ENCODE measurements at regions of chr2 and their contacts with region 1.

Region 1: GRCh38 chr2:44955593-44956392 is 14.3 kb downstream of the SIX3 start:
- DNase-seq: peak; percentile 61 to 79
- ATAC-seq: peak; percentile 72 to 91 (median 84)
- H3K4me3 ChIP-seq: peak overlapping the region in 9 of 10 donors; percentile 13 to 49 (median 38)
- H3K27ac ChIP-seq: no peak overlapping the region
- H3K4me1 ChIP-seq: peaks cover 15 to 37% (median 29%) of the 10 kb centered on the region in 9 donors
- H3K27me3 ChIP-seq: peaks cover 14 to 98% (median 80%) of the 10 kb centered on the region in 7 donors
- CTCF ChIP-seq: peak; percentile 62 to 95 (median 91)

Region 2: DNA sequence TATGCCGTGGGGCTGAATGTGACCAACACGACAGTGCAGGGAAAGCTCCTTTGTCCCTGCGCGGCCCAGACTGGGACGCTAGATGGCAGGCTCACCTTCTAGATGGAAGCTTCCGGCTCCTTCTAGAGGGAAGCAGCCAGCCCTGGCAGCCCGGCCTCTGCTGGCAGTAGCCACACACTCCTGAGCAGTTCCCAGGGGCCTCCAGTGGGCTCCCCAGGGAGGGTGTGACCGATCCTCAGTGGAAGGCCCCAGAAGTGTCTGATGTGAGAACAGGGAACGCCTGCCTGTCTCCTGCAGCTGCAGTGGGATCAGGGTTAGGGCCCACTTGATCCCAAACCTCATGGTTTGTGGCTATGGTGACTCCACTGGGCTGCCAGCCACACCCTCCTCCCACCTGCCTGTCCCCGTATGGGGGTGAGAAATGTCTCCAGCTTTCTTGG is 911.5 kb before region 1 on chr2:
- intact Hi-C with region 1: loop called in 9 of 10 experiments (anchors 2 to 10 kb)
- DNase-seq: peak; percentile 78 to 81
- ATAC-seq: peak; percentile 79 to 98 (median 96)
- H3K4me3 ChIP-seq: no peak overlapping the region
- H3K27ac ChIP-seq: no peak overlapping the region
- H3K4me1 ChIP-seq: peaks cover 0 to 7% (median 3%) of the 10 kb centered on the region in 9 donors
- H3K27me3 ChIP-seq: peaks cover 0 to 4% (median 0%) of the 10 kb centered on the region in 7 donors
- CTCF ChIP-seq: peak; percentile 46 to 94 (median 88)

Region 3: DNA sequence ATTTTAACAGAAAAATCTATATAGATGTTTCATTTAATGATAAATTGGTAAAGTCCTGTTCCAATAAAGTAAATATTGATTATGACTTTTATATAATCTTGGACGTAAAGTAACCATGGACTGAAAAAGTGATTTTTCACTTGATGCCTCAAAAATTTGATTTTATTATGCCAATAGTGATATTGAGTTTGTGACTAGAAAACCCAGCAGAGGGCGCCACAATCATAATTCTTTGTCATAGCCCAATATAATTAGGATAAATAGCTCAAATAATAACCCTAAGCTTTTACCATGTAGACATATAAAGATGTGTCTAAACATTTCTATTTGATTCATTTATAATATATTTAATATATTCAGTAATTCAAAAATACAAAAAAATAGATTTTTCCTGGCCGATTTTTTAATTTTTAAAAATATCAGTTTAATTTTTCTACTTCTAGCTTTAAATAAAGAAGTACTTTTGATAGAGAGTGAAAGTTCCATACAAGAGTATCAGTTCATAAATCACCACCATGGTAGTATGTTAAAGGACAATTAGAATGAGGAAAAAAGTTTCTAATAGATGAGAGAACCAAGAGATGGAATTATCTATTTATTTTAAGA is 563.4 kb before region 1 on chr2:
- intact Hi-C with region 1: loop called (anchors 2 to 10 kb)
- DNase-seq: peak in 1 of 2 donors; percentile 29
- ATAC-seq: no peak
- H3K4me3 ChIP-seq: no peak overlapping the region
- H3K27ac ChIP-seq: no peak overlapping the region
- H3K4me1 ChIP-seq: no peaks in the 10 kb centered on the region
- H3K27me3 ChIP-seq: no peaks in the 10 kb centered on the region
- CTCF ChIP-seq: peak in 8 of 9 donors; percentile 25 to 75 (median 65)

Region 4: GRCh38 chr2:44397447-44398175 is 558.2 kb before region 1 on chr2:
- intact Hi-C with region 1: loop called in 9 of 10 experiments (anchors 2 to 5 kb)
- DNase-seq: no peak
- ATAC-seq: no peak
- H3K4me3 ChIP-seq: no peak overlapping the region
- H3K27ac ChIP-seq: no peak overlapping the region
- H3K4me1 ChIP-seq: no peaks in the 10 kb centered on the region
- H3K27me3 ChIP-seq: no peaks in the 10 kb centered on the region
- CTCF ChIP-seq: no peak

Region 5: GRCh38 chr2:44560352-44560751 is 395.4 kb before region 1 on chr2:
- intact Hi-C with region 1: loop called in 1 of 10 experiments (anchors 10 kb)
- DNase-seq: peak in 1 of 2 donors; percentile 6
- ATAC-seq: no peak
- H3K4me3 ChIP-seq: no peak overlapping the region
- H3K27ac ChIP-seq: no peak overlapping the region
- H3K4me1 ChIP-seq: no peaks in the 10 kb centered on the region
- H3K27me3 ChIP-seq: no peaks in the 10 kb centered on the region
- CTCF ChIP-seq: peak in 7 of 9 donors; percentile 25 to 50 (median 40)

Measured in heart right ventricle (tissue), 16 donors.